HepG2 (cell line): ENCODE measurements at regions of chr12 and their contacts with region 1.

Region 1: DNA sequence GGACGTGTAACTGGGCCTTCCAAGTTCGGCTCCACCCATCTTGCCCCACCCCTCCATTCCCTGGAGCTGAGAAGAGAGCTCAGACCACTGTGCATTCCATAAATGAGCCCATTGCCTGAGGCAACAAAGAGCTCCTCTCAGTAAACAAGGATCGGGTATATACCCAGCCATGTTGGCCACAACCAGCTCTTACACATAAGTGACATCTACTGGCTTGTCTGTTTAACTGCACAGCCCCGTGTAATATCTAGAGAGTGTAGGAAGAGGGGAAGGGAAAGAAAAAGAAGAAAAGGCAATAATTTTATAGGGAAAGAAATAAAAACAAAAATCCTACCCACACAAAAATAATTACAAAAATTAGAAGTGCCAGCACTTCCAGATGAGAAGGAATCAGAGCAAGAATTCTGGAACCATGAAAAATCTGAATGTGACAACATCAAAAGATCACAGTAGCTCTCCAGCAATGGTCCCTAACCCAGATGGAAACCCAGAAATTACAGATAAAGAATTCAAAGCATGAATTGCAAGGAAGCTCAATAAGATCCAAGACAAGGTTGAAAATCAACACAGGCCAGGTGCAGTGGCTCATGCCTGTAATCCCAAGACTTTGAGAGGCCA is 308.1 kb downstream of the RPAP3 start:
- DNase-seq: peak; percentile 36
- ATAC-seq: peak; percentile 94
- H3K4me3 ChIP-seq: no peak overlapping the region
- H3K27ac ChIP-seq: no peak overlapping the region
- H3K4me1 ChIP-seq: no peaks in the 10 kb centered on the region
- H3K27me3 ChIP-seq: no peaks in the 10 kb centered on the region; a peak in 1 of 5 replicates
- CTCF ChIP-seq: peak; percentile 55
- EP300 ChIP-seq: no peak
- POLR2A ChIP-seq: no peak
- RAD21 ChIP-seq: peak; percentile 19; the same call in 1 of the 2 replicates

Region 2: GRCh38 chr12:47032644-47033043 is 365.1 kb before region 1 on chr12:
- CTCF ChIA-PET with region 1: interaction called, 4 read pairs
- POLR2A ChIA-PET with region 1: no interaction called
- in situ Hi-C with region 1: no loop called
- intact Hi-C with region 1: loop called (anchors 2 kb)
- DNase-seq: peak; percentile 23
- ATAC-seq: peak; percentile 46; the same call in 1 of the 3 replicates
- H3K4me3 ChIP-seq: no peak overlapping the region
- H3K27ac ChIP-seq: no peak overlapping the region
- H3K4me1 ChIP-seq: no peaks in the 10 kb centered on the region
- H3K27me3 ChIP-seq: peaks cover 0 to 5% of the 10 kb centered on the region in 2 experiments; a peak in 2 of 5 replicates
- CTCF ChIP-seq: peak; percentile 60
- EP300 ChIP-seq: no peak
- POLR2A ChIP-seq: no peak
- RAD21 ChIP-seq: 0 out of 2 replicates have a peak, but pooled peaks have one; percentile 39